ENCODE measurements at regions of chr3 and their contacts with region 1.

Region 1: DNA sequence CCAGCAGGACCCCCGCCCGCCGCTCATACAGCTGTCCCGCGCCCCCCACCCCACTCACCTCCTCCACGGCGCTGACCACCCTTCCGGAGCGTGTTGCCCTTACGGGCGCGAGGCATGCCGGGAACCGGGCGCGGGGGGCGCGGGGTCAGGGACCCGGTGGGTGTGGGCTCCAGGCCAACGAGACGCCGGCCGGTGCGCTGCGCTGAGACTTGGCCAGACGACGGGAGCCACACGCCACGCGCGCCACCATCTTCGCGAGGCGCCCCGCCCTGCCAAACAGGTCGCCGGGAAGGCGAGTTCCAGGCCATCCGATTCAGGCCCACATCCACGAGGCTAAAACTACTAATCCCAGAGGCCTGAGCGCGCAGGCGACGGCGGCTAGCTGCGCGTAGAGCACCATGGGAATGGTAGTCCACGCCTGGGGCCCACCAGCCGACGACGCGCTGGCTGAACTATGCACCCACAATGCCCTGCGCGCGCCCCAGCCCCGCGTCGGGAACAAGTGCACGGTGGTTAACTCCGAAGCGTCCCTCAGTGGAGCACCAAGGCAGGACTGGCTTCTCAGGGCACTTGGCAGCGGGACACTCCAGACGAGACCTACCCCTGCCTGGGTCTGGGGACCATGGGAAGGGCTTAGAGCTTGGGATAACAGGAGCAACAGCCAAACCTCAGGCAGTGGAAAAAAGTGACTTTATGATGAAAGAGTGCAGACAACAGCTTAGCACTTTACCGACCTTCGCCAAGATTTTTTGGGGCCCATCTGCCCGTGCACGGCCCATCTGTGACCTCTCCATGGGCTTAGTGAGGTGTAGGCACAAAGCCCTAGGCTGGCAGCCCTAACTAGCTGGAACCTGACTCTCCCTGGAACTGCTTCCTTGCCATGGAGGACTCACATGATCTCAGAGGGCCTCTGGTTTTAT is at the start of gene IFRD2:
- DNase-seq: peak; percentile 95
- ATAC-seq: peak; percentile 91
- H3K4me3 ChIP-seq: peak within 1 kb of the TSS; percentile 60 to 92 (median 85)
- H3K27ac ChIP-seq: peak within 1 kb of the TSS; percentile 73
- H3K4me1 ChIP-seq: peaks cover 33% of the 10 kb centered on the region
- H3K27me3 ChIP-seq: no peaks in the 10 kb centered on the region
- CTCF ChIP-seq: peak; percentile 53
- EP300 ChIP-seq: peak in 1 of 2 experiments; percentile 44; a peak in 2 of 4 replicates
- POLR2A ChIP-seq: peak in 1 of 2 experiments; percentile 73; a peak in 2 of 4 replicates
- RAD21 ChIP-seq: peak; percentile 31; the same call in 1 of the 2 replicates
- total RNA-seq, gene IFRD2: 81.4 and 96.1 TPM in 2 replicates

Region 2: DNA sequence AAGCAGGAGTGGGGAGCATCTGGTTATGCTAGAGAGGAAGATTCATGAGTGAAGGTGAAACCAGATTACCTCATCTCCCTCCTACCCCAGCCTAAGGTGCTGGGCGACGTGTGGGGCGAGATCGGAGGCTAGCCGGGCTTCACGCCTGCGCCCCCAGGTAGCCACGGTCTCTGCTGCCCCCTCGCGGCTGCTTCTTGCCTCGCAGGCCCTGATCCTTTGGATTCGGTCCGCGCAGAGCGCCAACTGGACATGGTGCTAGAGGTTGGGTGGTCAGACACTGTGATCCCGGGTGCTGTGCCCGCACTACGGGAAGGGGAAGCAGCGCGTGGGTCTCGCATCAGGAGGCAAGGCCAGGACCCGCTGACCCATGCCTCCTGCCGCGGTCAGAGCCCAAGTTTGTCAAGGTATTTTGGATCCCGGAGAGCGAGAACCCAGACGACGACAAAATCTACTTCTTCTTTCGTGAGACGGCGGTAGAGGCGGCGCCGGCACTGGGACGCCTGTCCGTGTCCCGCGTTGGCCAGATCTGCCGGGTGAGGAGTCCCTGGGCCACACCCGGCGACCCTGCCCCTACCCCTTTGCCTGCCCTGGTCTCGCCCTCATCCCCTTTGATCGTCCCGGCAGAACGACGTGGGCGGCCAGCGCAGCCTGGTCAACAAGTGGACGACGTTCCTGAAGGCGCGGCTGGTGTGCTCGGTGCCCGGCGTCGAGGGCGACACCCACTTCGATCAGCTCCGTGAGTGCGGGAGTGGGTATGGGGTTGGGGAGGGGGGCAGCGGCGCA is 19.3 kb before region 1 on chr3:
- CTCF ChIA-PET with region 1: no interaction called
- POLR2A ChIA-PET with region 1: interaction called, 28 read pairs
- in situ Hi-C with region 1: no loop called
- intact Hi-C with region 1: no loop called
- DNase-seq: peak; percentile 64
- ATAC-seq: peak; percentile 13
- H3K4me3 ChIP-seq: no peak overlapping the region
- H3K27ac ChIP-seq: peak overlapping the region; percentile 88
- H3K4me1 ChIP-seq: peaks cover 54% of the 10 kb centered on the region
- H3K27me3 ChIP-seq: no peaks in the 10 kb centered on the region; a peak in 1 of 5 replicates
- CTCF ChIP-seq: peak; percentile 99
- EP300 ChIP-seq: 0 out of 4 replicates have a peak, but pooled peaks of 1 of the 2 experiments have one; percentile 26
- POLR2A ChIP-seq: no peak
- RAD21 ChIP-seq: peak; percentile 99

Region 3: DNA sequence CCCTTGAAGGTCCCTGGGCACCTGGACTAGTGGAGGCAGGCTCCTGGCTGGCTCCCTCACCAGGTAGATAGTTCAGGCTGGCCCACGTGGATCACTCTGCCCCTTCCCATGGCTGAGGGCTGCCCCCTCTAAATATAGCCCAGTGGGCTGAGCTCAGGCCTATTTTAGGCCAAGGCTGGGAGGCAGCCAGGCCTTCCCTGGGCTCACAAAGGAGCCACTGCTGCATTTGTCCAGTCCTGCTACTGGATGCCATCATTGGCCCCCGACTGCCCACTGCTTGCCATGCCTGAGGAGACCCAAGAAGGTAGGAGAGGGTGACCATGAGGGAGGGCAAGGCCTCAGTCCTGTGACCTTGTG is 13.6 kb before region 1 on chr3 and contains the start of gene LSMEM2:
- CTCF ChIA-PET with region 1: no interaction called
- POLR2A ChIA-PET with region 1: interaction called, 28 read pairs
- in situ Hi-C with region 1: no loop called
- intact Hi-C with region 1: no loop called
- DNase-seq: no peak
- ATAC-seq: peak; percentile 9
- H3K4me3 ChIP-seq: no peak within 1 kb of the TSS
- H3K27ac ChIP-seq: no peak within 1 kb of the TSS
- H3K4me1 ChIP-seq: peaks cover 37% of the 10 kb centered on the region
- H3K27me3 ChIP-seq: no peaks in the 10 kb centered on the region
- CTCF ChIP-seq: no peak
- EP300 ChIP-seq: no peak
- POLR2A ChIP-seq: no peak
- RAD21 ChIP-seq: no peak
- total RNA-seq, gene LSMEM2: 0.07 TPM in 1 of 2 replicates, not detected in the other

Region 4: GRCh38 chr3:50327943-50328691 is 35.7 kb after region 1 on chr3 and contains the start of gene TUSC2:
- CTCF ChIA-PET with region 1: interaction called, 4 read pairs
- POLR2A ChIA-PET with region 1: interaction called, 222 read pairs
- in situ Hi-C with region 1: no loop called
- intact Hi-C with region 1: no loop called
- DNase-seq: peak; percentile 95
- ATAC-seq: peak; percentile 79
- H3K4me3 ChIP-seq: peak within 1 kb of the TSS; percentile 79 to 95 (median 92)
- H3K27ac ChIP-seq: peak within 1 kb of the TSS; percentile 67
- H3K4me1 ChIP-seq: peaks cover 52% of the 10 kb centered on the region
- H3K27me3 ChIP-seq: no peaks in the 10 kb centered on the region
- CTCF ChIP-seq: no peak; the same call in 1 of the 2 replicates
- EP300 ChIP-seq: no peak
- POLR2A ChIP-seq: peak in 1 of 2 experiments; percentile 80; a peak in 2 of 4 replicates
- RAD21 ChIP-seq: peak; percentile 39; the same call in 1 of the 2 replicates
- total RNA-seq, gene TUSC2: 35.9 and 36.7 TPM in 2 replicates